ENCODE measurements at regions of chr11 and their contacts with region 1.

Region 1: DNA sequence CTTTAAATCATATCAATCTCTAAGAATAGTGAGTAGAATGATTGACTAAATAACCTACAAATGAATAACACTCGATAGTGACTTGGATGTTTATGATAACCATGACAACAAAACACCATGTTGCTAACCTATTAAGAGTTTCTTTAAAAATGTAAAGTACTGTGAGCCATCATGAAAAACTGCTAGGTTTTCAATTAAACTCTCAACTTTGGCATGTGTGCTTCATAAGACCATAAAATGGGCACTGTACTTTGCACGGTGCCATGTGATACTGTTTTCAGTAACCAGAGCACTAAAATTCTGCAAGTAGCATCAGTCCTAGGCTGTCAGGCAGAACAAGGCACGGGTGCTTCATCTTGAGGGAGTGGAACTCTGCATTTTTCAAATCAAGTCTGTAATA is 96.2 kb upstream of the TRIM77 start:
- DNase-seq: no peak
- ATAC-seq: no peak
- H3K4me3 ChIP-seq: no peak overlapping the region
- H3K27ac ChIP-seq: no peak overlapping the region
- H3K4me1 ChIP-seq: no peaks in the 10 kb centered on the region
- H3K27me3 ChIP-seq: no peaks in the 10 kb centered on the region
- CTCF ChIP-seq: no peak
- EP300 ChIP-seq: no peak
- POLR2A ChIP-seq: no peak
- RAD21 ChIP-seq: no peak

Region 2: GRCh38 chr11:88618327-88619070 is 995.4 kb before region 1 on chr11:
- CTCF ChIA-PET with region 1: no interaction called
- POLR2A ChIA-PET with region 1: no interaction called
- in situ Hi-C with region 1: no loop called
- intact Hi-C with region 1: no loop called
- DNase-seq: no peak
- ATAC-seq: no peak
- H3K4me3 ChIP-seq: no peak overlapping the region
- H3K27ac ChIP-seq: no peak overlapping the region
- H3K4me1 ChIP-seq: no peaks in the 10 kb centered on the region
- H3K27me3 ChIP-seq: no peaks in the 10 kb centered on the region; a peak in 1 of 5 replicates
- CTCF ChIP-seq: no peak
- EP300 ChIP-seq: no peak
- POLR2A ChIP-seq: no peak
- RAD21 ChIP-seq: no peak

Region 3: DNA sequence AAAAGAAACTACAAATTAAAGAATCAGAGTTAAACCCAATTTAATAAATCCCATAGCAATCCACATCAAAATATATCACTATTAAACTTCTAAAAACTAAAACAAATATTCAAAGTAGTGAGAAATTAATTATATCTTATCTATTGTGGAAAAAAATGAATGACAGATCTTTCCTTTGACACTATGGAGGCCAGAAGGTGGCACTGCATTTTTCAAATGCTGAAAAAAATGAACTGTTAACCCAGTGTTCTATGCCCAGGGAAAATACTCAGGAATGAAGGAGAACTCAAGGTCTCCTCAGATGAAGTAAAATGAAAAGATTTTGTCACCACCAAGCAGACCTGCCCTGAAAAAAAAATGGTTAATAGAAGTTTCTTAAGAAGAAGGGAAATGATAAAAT is 408.5 kb before region 1 on chr11:
- CTCF ChIA-PET with region 1: no interaction called
- POLR2A ChIA-PET with region 1: no interaction called
- in situ Hi-C with region 1: no loop called
- intact Hi-C with region 1: loop called (anchors 2 kb)
- DNase-seq: no peak
- ATAC-seq: no peak
- H3K4me3 ChIP-seq: no peak overlapping the region
- H3K27ac ChIP-seq: no peak overlapping the region
- H3K4me1 ChIP-seq: no peaks in the 10 kb centered on the region
- H3K27me3 ChIP-seq: no peaks in the 10 kb centered on the region
- CTCF ChIP-seq: no peak
- EP300 ChIP-seq: no peak
- POLR2A ChIP-seq: no peak
- RAD21 ChIP-seq: no peak

Region 4: DNA sequence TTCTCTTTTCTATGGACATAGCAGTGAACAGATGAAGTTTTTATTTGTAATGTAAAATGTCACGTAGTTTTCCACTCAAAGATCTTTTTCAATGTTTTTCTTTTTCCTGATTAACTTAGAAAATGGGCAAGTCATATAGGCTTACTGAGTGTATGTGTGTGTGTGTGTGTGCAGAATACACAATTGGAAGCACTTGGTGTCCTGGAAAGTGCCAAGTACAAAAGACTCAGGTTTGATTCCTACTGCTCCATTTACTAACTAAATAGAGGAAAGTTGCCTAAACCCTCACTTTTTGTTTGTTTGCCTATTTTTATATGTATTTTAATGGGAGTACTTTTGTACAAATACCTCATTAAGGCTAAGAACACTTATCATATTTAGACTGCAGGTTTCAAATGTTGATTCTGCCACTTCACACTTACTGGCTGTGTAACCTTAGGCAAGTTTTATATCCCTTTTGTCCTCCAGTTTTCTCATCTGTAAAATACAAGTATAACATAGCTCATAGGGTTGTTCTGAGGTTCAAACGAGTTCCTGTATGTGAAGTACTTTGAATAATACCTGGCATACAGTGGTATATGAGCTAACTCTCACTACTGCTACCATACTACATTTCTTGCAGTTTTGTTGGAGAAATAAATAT is 346.1 kb before region 1 on chr11:
- CTCF ChIA-PET with region 1: no interaction called
- POLR2A ChIA-PET with region 1: no interaction called
- in situ Hi-C with region 1: no loop called
- intact Hi-C with region 1: no loop called
- DNase-seq: no peak
- ATAC-seq: no peak
- H3K4me3 ChIP-seq: no peak overlapping the region
- H3K27ac ChIP-seq: no peak overlapping the region
- H3K4me1 ChIP-seq: no peaks in the 10 kb centered on the region
- H3K27me3 ChIP-seq: no peaks in the 10 kb centered on the region
- CTCF ChIP-seq: no peak
- EP300 ChIP-seq: no peak
- POLR2A ChIP-seq: no peak
- RAD21 ChIP-seq: no peak

Region 5: DNA sequence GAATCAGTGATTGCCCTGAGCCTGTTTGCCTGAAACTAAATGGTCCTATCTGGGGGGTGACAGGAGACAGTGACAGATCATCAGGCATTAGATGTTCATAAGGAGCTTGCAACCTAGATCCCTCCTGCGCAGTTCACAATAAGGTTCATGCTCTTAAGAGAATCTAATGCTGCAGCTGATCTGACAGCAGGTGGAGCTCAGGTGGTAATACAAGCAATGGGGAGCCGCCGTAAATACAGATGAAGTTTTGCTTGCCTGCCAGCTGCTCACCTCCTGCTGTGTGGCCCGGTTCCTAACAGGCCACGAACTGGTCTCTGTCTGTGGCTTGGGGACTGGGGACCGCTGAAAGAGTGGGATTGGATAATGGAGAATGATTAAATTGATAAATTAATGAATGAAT is 136.7 kb before region 1 on chr11:
- CTCF ChIA-PET with region 1: no interaction called
- POLR2A ChIA-PET with region 1: no interaction called
- in situ Hi-C with region 1: no loop called
- intact Hi-C with region 1: loop called (anchors 2 kb)
- DNase-seq: peak; percentile 4
- ATAC-seq: peak; percentile 66
- H3K4me3 ChIP-seq: no peak overlapping the region
- H3K27ac ChIP-seq: no peak overlapping the region
- H3K4me1 ChIP-seq: no peaks in the 10 kb centered on the region
- H3K27me3 ChIP-seq: no peaks in the 10 kb centered on the region
- CTCF ChIP-seq: peak; percentile 17; the same call in 1 of the 2 replicates
- EP300 ChIP-seq: no peak
- POLR2A ChIP-seq: no peak
- RAD21 ChIP-seq: no peak

Measured in HepG2 (cell line).